SK-N-SH (cell line): ENCODE measurements at regions of chr9 and their contacts with region 1.

Region 1: DNA sequence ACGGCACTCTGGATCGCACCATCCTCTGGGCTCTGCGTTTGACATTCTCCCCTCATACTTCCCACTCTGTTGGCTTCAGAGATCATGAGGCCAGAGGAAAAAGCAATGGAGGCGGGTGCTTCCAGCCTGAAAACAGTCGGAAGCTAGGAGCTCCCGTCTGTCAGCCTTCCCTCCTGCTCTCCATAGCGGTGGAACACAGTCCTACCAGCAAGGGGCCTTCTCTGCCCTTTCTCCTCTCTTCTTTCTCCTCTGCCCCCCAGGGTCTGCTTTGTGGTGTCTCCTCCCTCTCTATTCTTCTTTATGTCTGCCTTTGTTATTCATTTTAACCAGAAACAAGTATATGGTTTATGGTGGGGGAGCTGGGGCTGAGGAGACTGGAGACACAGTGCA is 152.5 kb upstream of the NFIB start:
- DNase-seq: no peak
- H3K4me3 ChIP-seq: no peak overlapping the region
- H3K27ac ChIP-seq: no peak overlapping the region
- H3K4me1 ChIP-seq: peaks cover 0 to 4% of the 10 kb centered on the region in 2 experiments; a peak in 1 of 4 replicates
- H3K27me3 ChIP-seq: no peaks in the 10 kb centered on the region
- CTCF ChIP-seq: no peak
- EP300 ChIP-seq: no peak
- RAD21 ChIP-seq: no peak

Region 2: DNA sequence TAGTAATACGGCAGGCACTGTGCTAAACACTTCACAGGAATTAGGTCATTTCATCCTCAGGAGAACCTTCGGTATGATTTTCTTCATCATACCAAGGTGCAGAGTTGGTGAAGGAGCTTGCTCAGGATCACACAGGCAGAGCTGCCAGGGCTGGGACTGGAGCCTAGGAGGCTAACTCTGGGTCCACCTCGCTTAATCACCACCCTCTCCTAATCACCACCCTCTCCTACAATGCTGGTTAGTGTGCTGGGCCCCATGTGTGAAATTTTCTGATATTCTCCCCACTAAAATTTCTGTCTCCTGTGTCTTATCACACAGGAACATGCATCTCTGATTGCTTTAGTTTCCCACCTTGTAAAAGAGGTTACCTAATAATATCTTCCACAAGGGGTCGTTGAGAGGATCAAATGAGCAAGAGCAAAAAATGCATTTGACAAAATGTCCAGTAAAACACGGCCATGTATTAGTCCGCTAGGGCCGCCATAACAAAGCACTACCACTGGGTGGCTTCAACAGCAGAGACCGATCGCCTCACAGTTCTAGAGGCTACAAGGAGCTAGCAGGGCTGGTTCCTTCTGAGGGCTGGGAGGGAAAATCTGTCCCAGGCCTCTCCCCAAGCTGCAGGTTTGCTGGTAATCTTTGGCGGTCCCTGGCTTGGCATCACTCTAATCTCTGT is 24.3 kb before region 1 on chr9:
- CTCF ChIA-PET with region 1: interaction called, 14 read pairs
- POLR2A ChIA-PET with region 1: no interaction called
- DNase-seq: no peak
- H3K4me3 ChIP-seq: no peak overlapping the region
- H3K27ac ChIP-seq: no peak overlapping the region
- H3K4me1 ChIP-seq: peaks cover 8 to 28% of the 10 kb centered on the region in 2 experiments; a peak in 2 of 4 replicates
- H3K27me3 ChIP-seq: no peaks in the 10 kb centered on the region
- CTCF ChIP-seq: peak; percentile 47
- EP300 ChIP-seq: no peak
- RAD21 ChIP-seq: 0 out of 2 replicates have a peak, but pooled peaks have one; percentile 9

Region 3: GRCh38 chr9:14652729-14653377 is 186.4 kb after region 1 on chr9:
- CTCF ChIA-PET with region 1: interaction called, 10 read pairs
- POLR2A ChIA-PET with region 1: no interaction called
- DNase-seq: peak; percentile 40
- H3K4me3 ChIP-seq: no peak overlapping the region
- H3K27ac ChIP-seq: no peak overlapping the region
- H3K4me1 ChIP-seq: no peaks in the 10 kb centered on the region
- H3K27me3 ChIP-seq: no peaks in the 10 kb centered on the region
- CTCF ChIP-seq: peak; percentile 30; the same call in 1 of the 2 replicates
- EP300 ChIP-seq: no peak
- RAD21 ChIP-seq: peak; percentile 74